PC-3 (cell line): ENCODE measurements at regions of chr20 and their contacts with region 1.

Region 1: GRCh38 chr20:14055127-14055742 is 59.9 kb downstream of the MACROD2 start:
- DNase-seq: peak; percentile 83
- ATAC-seq: 0 out of 2 replicates have a peak, but pooled peaks have one; percentile 27
- H3K4me3 ChIP-seq: no peak overlapping the region
- H3K27ac ChIP-seq: no peak overlapping the region
- H3K4me1 ChIP-seq: no peaks in the 10 kb centered on the region
- H3K27me3 ChIP-seq: no peaks in the 10 kb centered on the region
- CTCF ChIP-seq: peak; percentile 88

Region 2: DNA sequence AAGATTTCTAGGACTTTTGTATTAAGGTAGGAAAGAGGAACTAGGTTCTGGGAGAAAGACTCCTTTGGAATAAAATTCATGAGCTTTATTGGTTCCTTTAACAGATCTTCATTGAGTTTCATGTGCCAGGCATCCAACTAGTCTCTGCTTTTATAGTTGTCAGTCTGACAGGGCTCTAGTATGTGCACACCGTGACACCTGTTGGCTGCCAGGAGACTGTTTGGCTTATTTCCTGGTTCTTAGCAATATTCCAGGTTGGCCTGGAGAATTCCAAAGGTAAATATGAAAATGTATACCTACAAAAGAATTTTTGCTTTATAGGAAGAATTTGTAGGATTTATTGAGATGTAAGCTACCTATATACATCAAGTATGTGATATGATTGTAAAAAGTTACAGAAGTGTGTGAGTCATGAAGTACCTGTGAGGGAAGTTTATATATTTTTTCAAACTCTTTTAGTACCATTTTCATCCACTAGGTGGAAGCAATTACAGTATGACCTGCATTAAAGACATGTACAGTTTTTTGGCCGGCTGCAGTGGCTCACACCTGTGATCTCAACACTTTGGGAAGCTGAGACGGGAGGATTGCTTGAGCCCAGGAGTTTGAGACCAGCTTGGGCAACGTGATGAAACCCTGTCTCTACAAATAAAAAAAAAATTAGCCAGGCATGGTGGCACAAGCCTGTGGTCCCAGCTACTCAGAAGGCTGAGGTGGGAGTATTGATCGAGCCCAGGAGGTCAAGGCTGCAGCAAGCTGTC is 235.2 kb before region 1 on chr20:
- CTCF ChIA-PET with region 1: interaction called, 3 read pairs
- POLR2A ChIA-PET with region 1: no interaction called
- intact Hi-C with region 1: loop called (anchors 1 kb)
- DNase-seq: peak; percentile 95
- ATAC-seq: peak; percentile 72
- H3K4me3 ChIP-seq: no peak overlapping the region
- H3K27ac ChIP-seq: no peak overlapping the region
- H3K4me1 ChIP-seq: peaks cover 21% of the 10 kb centered on the region
- H3K27me3 ChIP-seq: no peaks in the 10 kb centered on the region
- CTCF ChIP-seq: peak; percentile 78

Region 3: GRCh38 chr20:13898011-13898612 is 157.1 kb before region 1 on chr20:
- CTCF ChIA-PET with region 1: no interaction called
- POLR2A ChIA-PET with region 1: no interaction called
- intact Hi-C with region 1: loop called (anchors 1 kb)
- DNase-seq: peak; percentile 58
- ATAC-seq: peak; percentile 88
- H3K4me3 ChIP-seq: no peak overlapping the region
- H3K27ac ChIP-seq: no peak overlapping the region
- H3K4me1 ChIP-seq: no peaks in the 10 kb centered on the region
- H3K27me3 ChIP-seq: no peaks in the 10 kb centered on the region
- CTCF ChIP-seq: peak; percentile 67

Region 4: DNA sequence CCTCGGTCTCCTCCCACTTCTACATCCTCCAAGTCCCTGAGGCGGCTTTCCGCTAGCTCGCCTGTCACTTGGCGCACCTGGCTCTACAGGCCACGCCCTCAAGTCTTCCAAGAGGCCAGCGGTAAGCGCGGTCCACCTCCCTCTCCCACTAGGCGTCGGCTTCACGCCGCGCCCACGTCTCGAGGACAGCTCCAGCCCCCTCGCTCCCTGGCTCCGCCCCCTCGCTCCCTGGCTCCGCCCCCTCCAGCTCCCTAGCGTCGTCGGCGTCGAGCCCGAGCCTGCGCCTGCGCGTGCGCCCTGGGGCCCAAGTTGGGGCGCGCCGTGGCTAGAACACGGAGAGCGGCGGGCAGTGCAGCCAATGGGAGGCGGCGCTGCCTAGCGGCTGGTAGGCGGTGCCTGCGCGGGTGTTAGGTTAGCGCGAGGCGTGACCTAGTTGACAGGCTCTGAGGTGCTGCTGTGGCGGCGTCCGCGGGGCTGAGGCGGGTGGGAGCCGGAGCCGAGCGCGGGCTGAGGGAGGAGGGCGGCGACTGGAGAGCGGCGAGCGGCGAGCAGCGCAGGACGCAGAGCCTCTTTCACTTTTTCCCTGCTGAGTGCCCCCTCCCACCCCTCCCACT is 60.0 kb before region 1 on chr20 and contains the start of gene MACROD2:
- CTCF ChIA-PET with region 1: no interaction called
- POLR2A ChIA-PET with region 1: no interaction called
- intact Hi-C with region 1: loop called (anchors 5 kb)
- DNase-seq: peak; percentile 99
- ATAC-seq: peak; percentile 96
- H3K4me3 ChIP-seq: peak within 1 kb of the TSS; percentile 74
- H3K27ac ChIP-seq: no peak within 1 kb of the TSS
- H3K4me1 ChIP-seq: peaks cover 7% of the 10 kb centered on the region; the same call in 1 of the 2 replicates
- H3K27me3 ChIP-seq: no peaks in the 10 kb centered on the region
- CTCF ChIP-seq: no peak
- total RNA-seq, gene MACROD2: 3.1 and 11.5 TPM in 2 replicates